ENCODE measurements at regions of chr7 and their contacts with region 1.

Region 1: DNA sequence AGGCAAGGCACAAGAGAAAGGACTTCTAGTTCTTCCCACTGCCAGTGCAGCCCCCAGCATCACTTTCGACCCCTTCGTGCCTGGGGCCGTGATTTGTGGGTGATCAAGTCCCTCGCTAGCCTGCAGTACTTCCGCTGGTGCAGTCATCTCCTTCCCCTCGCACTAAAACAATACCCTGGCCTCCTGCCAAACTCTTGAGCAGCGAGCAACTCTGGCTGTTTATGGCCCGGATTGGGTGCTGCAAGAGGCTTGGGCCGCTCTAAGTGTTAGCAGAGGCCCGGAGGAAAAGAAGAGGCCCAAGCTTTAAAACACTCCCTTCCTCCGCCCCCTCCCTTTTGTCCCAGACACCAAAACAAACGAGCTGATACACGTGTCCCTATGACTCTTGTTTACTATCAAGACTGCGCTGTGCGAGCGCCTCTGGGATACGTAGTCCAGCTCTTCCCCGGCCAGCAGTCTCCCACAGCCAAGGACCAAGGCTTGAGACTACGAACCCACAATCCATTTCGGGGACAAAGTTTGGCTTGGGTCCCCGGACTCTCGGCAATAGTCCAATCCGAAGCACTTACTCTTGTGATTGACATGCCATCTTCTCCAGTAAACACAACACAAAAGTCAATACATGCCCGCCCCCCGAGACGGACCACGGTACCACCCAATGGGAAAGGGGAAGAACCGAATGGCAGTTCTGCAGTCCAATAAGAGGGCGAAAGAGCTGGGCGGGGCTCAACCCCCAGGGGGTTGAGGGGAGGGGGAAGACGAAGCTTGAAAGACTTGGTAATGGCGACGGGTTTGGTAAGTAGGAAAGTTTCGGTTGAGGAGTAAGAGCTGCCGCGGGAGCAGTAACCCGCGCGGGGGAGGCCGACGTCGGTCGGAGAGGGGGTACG is at the start of gene HBP1:
- DNase-seq: peak; percentile 100
- ATAC-seq: peak; percentile 84
- H3K4me3 ChIP-seq: peak within 1 kb of the TSS; percentile 85 to 94 (median 89)
- H3K27ac ChIP-seq: peak within 1 kb of the TSS; percentile 97 to 100 (median 98)
- H3K4me1 ChIP-seq: peaks cover 32 to 38% of the 10 kb centered on the region in 2 donors
- H3K27me3 ChIP-seq: no peaks in the 10 kb centered on the region
- CTCF ChIP-seq: no peak
- POLR2A ChIP-seq: peak; percentile 40 to 95
- total RNA-seq, gene HBP1: 70.6 to 172 (median 143) TPM

Region 2: GRCh38 chr7:107044347-107045194 is 123.9 kb before region 1 on chr7 and contains the start of gene PRKAR2B:
- in situ Hi-C with region 1: no loop called
- intact Hi-C with region 1: loop called (anchors 10 kb)
- DNase-seq: peak in 1 of 2 donors; percentile 16
- ATAC-seq: peak; percentile 66 to 78
- H3K4me3 ChIP-seq: peak within 1 kb of the TSS; percentile 59 to 69 (median 64)
- H3K27ac ChIP-seq: peak within 1 kb of the TSS; percentile 24 to 56 (median 49)
- H3K4me1 ChIP-seq: peaks cover 11 to 14% of the 10 kb centered on the region in 2 donors
- H3K27me3 ChIP-seq: peaks cover 0 to 4% (median 3%) of the 10 kb centered on the region in 3 donors
- CTCF ChIP-seq: peak in 1 of 5 experiments; percentile 19
- POLR2A ChIP-seq: peak in 1 of 2 donors; percentile 8
- total RNA-seq, gene PRKAR2B: 0.85 to 6.0 (median 1.4) TPM

Region 3: GRCh38 chr7:107446531-107446930 is 278.1 kb after region 1 on chr7:
- in situ Hi-C with region 1: no loop called
- intact Hi-C with region 1: no loop called
- DNase-seq: no peak
- ATAC-seq: no peak
- H3K4me3 ChIP-seq: no peak overlapping the region
- H3K27ac ChIP-seq: no peak overlapping the region
- H3K4me1 ChIP-seq: peaks cover 0 to 4% of the 10 kb centered on the region in 2 donors
- H3K27me3 ChIP-seq: no peaks in the 10 kb centered on the region
- CTCF ChIP-seq: no peak
- POLR2A ChIP-seq: no peak

Region 4: DNA sequence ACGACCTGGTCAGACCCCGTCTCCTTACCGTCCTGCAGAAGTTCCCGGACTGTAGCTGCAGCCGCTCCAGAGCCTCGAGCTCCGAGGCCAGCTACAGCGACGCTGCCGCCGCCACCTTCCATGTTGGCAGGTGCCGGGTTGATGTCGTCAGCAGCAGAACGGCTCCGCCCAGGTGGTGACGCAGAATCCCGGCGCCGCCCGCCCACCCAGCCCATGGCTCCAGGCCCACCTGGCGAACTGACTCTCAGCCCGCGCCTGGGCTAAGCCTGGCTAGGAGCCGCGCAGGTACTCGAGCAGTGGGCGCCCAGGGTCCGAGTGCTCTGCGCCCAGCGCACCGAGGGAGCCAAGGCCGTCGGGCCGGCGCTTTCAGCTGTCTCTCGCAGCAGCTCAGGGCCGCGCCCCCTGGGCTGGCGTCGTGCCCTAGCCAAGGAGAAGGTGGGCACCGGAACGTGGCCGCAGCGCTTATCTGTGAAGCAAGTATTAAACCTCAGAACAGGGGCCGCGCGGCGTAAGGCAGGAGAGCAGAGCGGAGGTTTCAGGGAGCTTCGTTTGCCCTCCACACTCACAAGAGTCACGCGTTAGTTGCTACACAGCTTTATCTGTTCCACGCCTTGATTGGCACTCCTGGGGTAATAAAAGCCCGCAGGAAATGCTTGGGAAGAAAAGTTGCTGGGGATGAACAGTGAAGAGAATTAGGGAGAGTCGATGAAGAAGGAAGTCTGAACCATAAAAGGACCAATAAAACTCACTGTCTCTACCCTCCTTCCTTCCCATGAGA is 395.5 kb after region 1 on chr7 and contains the starts of genes COG5 and DUS4L:
- in situ Hi-C with region 1: no loop called
- intact Hi-C with region 1: loop called (anchors 5 kb)
- DNase-seq: peak; percentile 69 to 78
- ATAC-seq: peak; percentile 96 to 97
- H3K4me3 ChIP-seq: peak within 1 kb of the TSS; percentile 78 to 99 (median 95)
- H3K27ac ChIP-seq: peak within 1 kb of the TSS; percentile 92 to 99 (median 98)
- H3K4me1 ChIP-seq: peaks cover 37 to 41% of the 10 kb centered on the region in 2 donors
- H3K27me3 ChIP-seq: no peaks in the 10 kb centered on the region
- CTCF ChIP-seq: no peak
- POLR2A ChIP-seq: peak; percentile 54 to 56
- total RNA-seq, gene COG5: 20.8 to 49.7 (median 25.7) TPM
- total RNA-seq, gene DUS4L: 3.1 to 5.8 (median 3.6) TPM

Region 5: DNA sequence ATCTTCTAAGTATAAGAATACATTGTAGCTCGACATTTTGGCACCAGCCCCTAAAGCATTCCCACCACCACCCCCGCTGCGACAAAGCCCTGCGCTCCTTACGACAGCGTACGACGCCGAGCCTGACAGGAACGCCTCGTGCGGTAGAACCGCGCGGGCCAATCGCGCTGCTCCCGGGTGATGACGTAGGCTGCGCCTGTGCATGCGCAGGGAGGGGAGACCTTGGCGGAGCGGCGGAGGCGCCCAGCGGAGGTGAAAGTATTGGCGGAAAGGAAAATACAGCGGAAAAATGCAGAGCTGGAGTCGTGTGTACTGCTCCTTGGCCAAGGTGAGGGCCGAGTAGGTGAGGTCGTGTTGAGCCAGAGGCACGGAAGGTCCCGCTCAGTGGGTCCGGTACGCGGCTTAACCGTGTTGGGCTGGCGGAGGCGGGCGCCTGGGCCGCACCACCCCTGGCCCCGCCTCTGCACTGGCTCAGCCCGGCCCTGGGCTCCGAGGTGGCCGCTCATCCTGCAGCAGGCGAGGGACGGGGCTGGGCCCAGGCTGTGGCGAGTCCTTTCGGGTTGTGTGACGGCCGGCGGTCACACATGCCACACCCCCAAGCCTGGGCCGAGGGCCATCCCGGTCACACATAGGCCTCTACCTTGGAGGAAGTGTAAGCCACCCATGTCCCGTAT is 722.6 kb after region 1 on chr7 and contains the start of gene DLD:
- in situ Hi-C with region 1: loop called in 1 of 4 experiments (anchors 25 kb)
- intact Hi-C with region 1: loop called (anchors 5 kb)
- DNase-seq: peak; percentile 89 to 92
- ATAC-seq: peak; percentile 98
- H3K4me3 ChIP-seq: peak within 1 kb of the TSS; percentile 68 to 90 (median 84)
- H3K27ac ChIP-seq: peak within 1 kb of the TSS; percentile 93 to 98 (median 96)
- H3K4me1 ChIP-seq: peaks cover 36 to 42% of the 10 kb centered on the region in 2 donors
- H3K27me3 ChIP-seq: no peaks in the 10 kb centered on the region
- CTCF ChIP-seq: no peak
- POLR2A ChIP-seq: peak; percentile 88 to 91
- total RNA-seq, gene DLD: 110 to 157 (median 146) TPM

Measured in gastrocnemius medialis (tissue), 4 donors.